ENCODE measurements at regions of chr2 and their contacts with region 1.

Region 1: GRCh38 chr2:163345908-163346573 is 389.8 kb downstream of the FIGN start:
- DNase-seq: peak in 1 of 2 donors; percentile 5
- ATAC-seq: no peak
- H3K4me3 ChIP-seq: no peak overlapping the region
- H3K27ac ChIP-seq: no peak overlapping the region
- H3K4me1 ChIP-seq: peaks cover 0 to 26% (median 9%) of the 10 kb centered on the region in 9 donors
- H3K27me3 ChIP-seq: no peaks in the 10 kb centered on the region
- CTCF ChIP-seq: peak; percentile 58 to 87 (median 81)

Region 2: GRCh38 chr2:163465440-163465839 is 119.4 kb after region 1 on chr2:
- intact Hi-C with region 1: loop called in 2 of 10 experiments (anchors 5 kb)
- DNase-seq: no peak
- ATAC-seq: peak; percentile 44 to 79 (median 63)
- H3K4me3 ChIP-seq: no peak overlapping the region
- H3K27ac ChIP-seq: no peak overlapping the region
- H3K4me1 ChIP-seq: peaks cover 0 to 29% (median 3%) of the 10 kb centered on the region in 9 donors
- H3K27me3 ChIP-seq: no peaks in the 10 kb centered on the region
- CTCF ChIP-seq: no peak

Region 3: DNA sequence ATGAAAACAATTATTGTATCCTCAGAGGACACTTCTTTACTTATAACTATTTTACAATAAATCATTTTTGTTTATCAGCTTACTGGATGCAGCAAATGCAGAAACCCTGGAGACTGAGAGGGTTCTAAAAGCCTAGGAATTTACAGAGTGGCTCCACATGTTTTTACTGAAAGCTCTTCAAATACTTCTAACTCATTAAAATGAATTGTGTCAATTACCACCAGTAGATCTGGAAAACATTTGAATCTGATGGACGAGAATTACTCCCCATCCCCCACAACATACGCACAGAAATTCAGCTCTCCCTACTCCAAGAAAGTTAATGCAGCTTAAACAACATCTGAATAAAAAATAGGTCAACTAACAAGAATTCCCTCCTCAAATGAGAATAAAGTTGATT is 709.6 kb after region 1 on chr2:
- intact Hi-C with region 1: loop called in 8 of 10 experiments (anchors 2 to 10 kb)
- DNase-seq: no peak
- ATAC-seq: no peak
- H3K4me3 ChIP-seq: no peak overlapping the region
- H3K27ac ChIP-seq: no peak overlapping the region
- H3K4me1 ChIP-seq: peaks cover 0 to 11% (median 3%) of the 10 kb centered on the region in 9 donors
- H3K27me3 ChIP-seq: no peaks in the 10 kb centered on the region
- CTCF ChIP-seq: no peak

Region 4: GRCh38 chr2:164134336-164134735 is 788.3 kb after region 1 on chr2:
- intact Hi-C with region 1: loop called in 1 of 10 experiments (anchors 10 kb)
- DNase-seq: no peak
- ATAC-seq: no peak
- H3K4me3 ChIP-seq: no peak overlapping the region
- H3K27ac ChIP-seq: no peak overlapping the region
- H3K4me1 ChIP-seq: peaks cover 0 to 5% (median 0%) of the 10 kb centered on the region in 9 donors
- H3K27me3 ChIP-seq: no peaks in the 10 kb centered on the region
- CTCF ChIP-seq: no peak

Region 5: GRCh38 chr2:164430166-164430783 is 1084.2 kb after region 1 on chr2:
- intact Hi-C with region 1: loop called in 8 of 10 experiments (anchors 5 to 10 kb)
- DNase-seq: peak in 1 of 2 donors; percentile 11
- ATAC-seq: no peak
- H3K4me3 ChIP-seq: no peak overlapping the region
- H3K27ac ChIP-seq: no peak overlapping the region
- H3K4me1 ChIP-seq: no peaks in the 10 kb centered on the region
- H3K27me3 ChIP-seq: peaks cover 0 to 14% (median 0%) of the 10 kb centered on the region in 7 donors
- CTCF ChIP-seq: peak in 7 of 9 donors; percentile 55 to 73 (median 63)